Motor neuron (in vitro differentiated cells): ENCODE measurements at regions of chr5 and their contacts with region 1.

Region 1: GRCh38 chr5:64612344-64612961 is 77.8 kb upstream of the SHISAL2B start:
- ATAC-seq: peak in 5 of 8 experiments; percentile 42 to 87 (median 75)
- H3K4me3 ChIP-seq: no peak overlapping the region
- H3K27ac ChIP-seq: no peak overlapping the region
- H3K4me1 ChIP-seq: no peaks in the 10 kb centered on the region

Region 2: DNA sequence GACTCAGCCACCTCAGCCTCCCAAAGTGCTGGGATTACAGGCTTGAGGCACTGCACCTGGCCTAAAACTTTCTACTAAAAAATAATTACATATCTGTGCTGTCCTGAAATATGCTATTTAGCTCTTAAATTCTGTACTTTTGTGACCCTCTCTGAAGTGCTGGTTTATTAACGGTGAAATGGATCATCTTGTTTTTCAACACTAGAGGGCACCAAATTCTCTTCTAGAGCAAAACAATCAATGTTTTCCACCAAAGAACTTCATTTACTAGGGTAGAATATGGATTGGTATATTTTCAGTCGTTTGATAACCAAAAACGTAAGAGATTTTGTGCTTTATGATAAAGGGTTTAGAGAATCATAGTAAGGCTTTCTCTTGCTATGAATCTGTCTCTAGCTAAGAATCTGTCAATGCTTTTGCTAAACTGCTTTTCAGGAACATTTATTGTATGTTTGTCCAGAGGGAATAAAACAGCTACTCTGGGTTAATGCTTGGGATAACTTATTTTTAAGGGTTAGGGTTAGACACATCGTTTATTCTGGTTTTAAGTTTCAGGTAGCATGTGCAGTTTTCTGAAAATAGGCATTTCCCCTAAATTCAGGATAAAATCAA is 383.2 kb before region 1 on chr5:
- in situ Hi-C with region 1: loop called in 5 of 9 experiments (anchors 10 to 25 kb)
- ATAC-seq: peak in 6 of 8 experiments; percentile 18 to 55 (median 35)
- H3K4me3 ChIP-seq: no peak overlapping the region
- H3K27ac ChIP-seq: no peak overlapping the region
- H3K4me1 ChIP-seq: no peaks in the 10 kb centered on the region

Region 3: GRCh38 chr5:64505769-64506566 is 106.5 kb before region 1 on chr5 and contains the start of gene RGS7BP:
- in situ Hi-C with region 1: loop called in 1 of 9 experiments (anchors 25 kb)
- ATAC-seq: peak; percentile 84 to 93 (median 88)
- H3K4me3 ChIP-seq: peak within 1 kb of the TSS; percentile 63 to 83 (median 73)
- H3K27ac ChIP-seq: peak within 1 kb of the TSS; percentile 60 to 88
- H3K4me1 ChIP-seq: peaks cover 18 to 24% of the 10 kb centered on the region in 2 donors
- total RNA-seq, gene RGS7BP: 0.10 to 9.5 (median 3.8) TPM

Region 4: DNA sequence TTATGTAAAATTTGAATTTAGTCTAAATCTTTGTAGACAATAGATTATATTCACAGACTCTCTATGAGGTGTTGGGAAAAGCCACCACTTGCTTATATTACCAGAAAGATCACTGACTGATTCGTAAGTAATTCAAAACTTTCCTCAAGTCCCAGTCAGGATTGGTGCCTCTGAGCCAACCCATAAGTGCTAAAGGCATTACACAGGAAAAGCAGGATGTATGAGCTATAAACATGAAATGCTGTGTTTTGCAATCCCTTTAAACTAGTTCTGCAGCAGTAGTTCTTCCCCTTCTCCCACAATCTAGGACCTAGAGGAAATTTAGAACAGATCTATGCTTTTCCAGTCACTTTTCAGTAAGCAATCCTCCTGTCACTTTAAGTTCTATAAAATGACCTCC is 1060.3 kb after region 1 on chr5:
- in situ Hi-C with region 1: no loop called
- ATAC-seq: no peak
- H3K4me3 ChIP-seq: no peak overlapping the region
- H3K27ac ChIP-seq: no peak overlapping the region
- H3K4me1 ChIP-seq: no peaks in the 10 kb centered on the region